Activated CD4-positive, alpha-beta memory T cell treated with anti-CD3 and anti-CD28 coated beads for 36 hours (primary cell): ENCODE measurements at regions of chr6 and their contacts with region 1.

Region 1: GRCh38 chr6:46090115-46091079 is 39.4 kb upstream of the ENPP4 start:
- DNase-seq: peak; percentile 73
- H3K4me3 Mint-ChIP-seq: no peak overlapping the region
- H3K27ac Mint-ChIP-seq: no peak overlapping the region
- H3K4me1 Mint-ChIP-seq: no peaks in the 10 kb centered on the region
- H3K27me3 Mint-ChIP-seq: peaks cover 30% of the 10 kb centered on the region

Region 2: DNA sequence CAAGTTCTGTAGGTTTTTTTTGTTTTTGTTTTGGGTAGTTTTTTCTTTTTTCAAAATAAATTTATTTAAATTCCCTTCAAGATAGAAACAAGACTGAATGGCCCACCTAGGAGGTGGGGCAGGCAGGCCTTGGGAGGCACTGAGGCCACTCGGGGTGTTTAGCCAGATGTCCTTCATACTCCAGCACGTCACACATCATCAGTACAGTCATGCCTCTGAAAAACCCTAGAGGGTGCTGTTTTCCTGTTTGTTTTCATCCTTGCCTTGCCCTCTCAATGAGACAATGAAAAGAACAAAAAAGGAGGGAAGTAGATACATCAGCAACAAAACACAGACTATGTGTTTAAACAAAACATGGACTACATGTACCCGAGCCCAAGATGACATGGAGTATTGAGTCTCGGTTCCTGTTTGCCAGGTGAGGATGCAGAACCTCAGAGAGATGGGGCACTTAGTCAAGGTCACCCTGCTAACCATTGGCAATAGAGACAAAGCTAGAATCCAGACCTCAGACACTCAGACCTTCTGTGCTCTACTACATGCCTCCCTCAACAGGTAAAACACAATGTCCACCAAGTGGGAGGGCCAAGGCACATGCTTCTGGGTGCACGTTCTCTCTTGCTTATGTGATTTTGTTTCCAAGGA is 47.9 kb before region 1 on chr6:
- CTCF ChIA-PET with region 1: interaction called, 19 read pairs
- POLR2A ChIA-PET with region 1: no interaction called
- intact Hi-C with region 1: loop called (anchors 1 kb)
- DNase-seq: peak; percentile 23
- H3K4me3 Mint-ChIP-seq: no peak overlapping the region
- H3K27ac Mint-ChIP-seq: no peak overlapping the region
- H3K4me1 Mint-ChIP-seq: peaks cover 13% of the 10 kb centered on the region
- H3K27me3 Mint-ChIP-seq: peaks cover 1% of the 10 kb centered on the region

Region 3: DNA sequence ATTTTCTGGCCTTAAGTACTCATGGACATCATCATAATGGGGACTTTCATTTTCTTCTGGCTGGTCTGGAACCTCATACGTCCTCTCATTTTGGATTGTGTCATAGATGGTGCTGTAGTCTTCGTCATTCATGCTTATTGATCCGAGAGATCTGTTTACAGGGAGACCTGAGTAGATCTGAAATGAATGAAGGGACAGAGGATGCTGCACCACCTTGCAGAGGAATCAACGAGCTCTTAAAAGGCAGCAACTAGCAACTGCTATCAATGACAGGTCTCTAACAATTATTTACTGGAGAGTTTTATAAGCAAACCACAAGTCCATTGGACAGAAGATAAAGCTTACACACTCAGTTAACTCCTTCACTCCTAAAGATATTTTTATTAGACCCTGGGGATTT is 10.3 kb before region 1 on chr6:
- CTCF ChIA-PET with region 1: interaction called, 17 read pairs
- POLR2A ChIA-PET with region 1: no interaction called
- intact Hi-C with region 1: no loop called
- DNase-seq: no peak
- H3K4me3 Mint-ChIP-seq: no peak overlapping the region
- H3K27ac Mint-ChIP-seq: no peak overlapping the region
- H3K4me1 Mint-ChIP-seq: peaks cover 12% of the 10 kb centered on the region
- H3K27me3 Mint-ChIP-seq: no peaks in the 10 kb centered on the region

Region 4: GRCh38 chr6:46129629-46130511 is 39.5 kb after region 1 on chr6 and contains the start of gene ENPP4:
- CTCF ChIA-PET with region 1: interaction called, 17 read pairs
- POLR2A ChIA-PET with region 1: no interaction called
- intact Hi-C with region 1: no loop called
- DNase-seq: peak; percentile 94
- H3K4me3 Mint-ChIP-seq: peak within 1 kb of the TSS; percentile 86
- H3K27ac Mint-ChIP-seq: peak within 1 kb of the TSS; percentile 57
- H3K4me1 Mint-ChIP-seq: peaks cover 30% of the 10 kb centered on the region
- H3K27me3 Mint-ChIP-seq: no peaks in the 10 kb centered on the region
- total RNA-seq, gene ENPP4: 8.5 to 8.8 TPM

Region 5: GRCh38 chr6:46410334-46410953 is 320.0 kb after region 1 on chr6:
- CTCF ChIA-PET with region 1: interaction called, 60 read pairs
- POLR2A ChIA-PET with region 1: no interaction called
- intact Hi-C with region 1: loop called (anchors 1 kb)
- DNase-seq: peak; percentile 34
- H3K4me3 Mint-ChIP-seq: no peak overlapping the region
- H3K27ac Mint-ChIP-seq: no peak overlapping the region
- H3K4me1 Mint-ChIP-seq: no peaks in the 10 kb centered on the region
- H3K27me3 Mint-ChIP-seq: no peaks in the 10 kb centered on the region

Region 6: DNA sequence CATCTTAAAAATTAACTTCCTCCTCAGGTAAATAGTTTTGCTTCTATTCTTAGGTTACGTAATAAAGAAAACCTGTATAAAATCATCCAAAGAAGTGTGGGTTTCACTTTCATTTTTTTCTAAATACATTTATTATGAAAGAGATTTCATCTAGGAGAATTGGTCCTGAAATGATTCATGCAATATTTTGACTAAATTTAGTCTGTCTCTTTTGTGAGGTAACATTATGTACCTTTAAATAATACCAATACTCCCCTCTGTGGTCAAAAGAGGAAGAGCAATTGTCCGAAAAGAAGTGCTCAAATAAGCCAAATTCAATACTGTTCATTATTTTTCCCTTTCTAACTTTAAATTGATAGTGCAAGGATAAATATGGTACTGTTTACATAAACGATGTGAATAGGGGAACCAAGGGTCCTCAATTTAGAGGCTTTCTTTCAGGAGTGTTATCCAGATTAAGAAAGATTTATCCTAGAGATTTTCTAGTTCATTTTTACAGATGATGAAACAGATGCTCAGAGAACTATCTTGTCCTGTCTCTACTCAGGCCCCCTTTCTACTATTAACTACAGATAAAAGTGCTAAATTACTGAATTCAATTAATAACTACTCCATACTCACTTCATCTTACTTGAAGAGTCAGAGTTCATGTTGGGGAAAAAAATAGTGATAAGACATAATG is 536.0 kb after region 1 on chr6:
- CTCF ChIA-PET with region 1: interaction called, 7 read pairs
- POLR2A ChIA-PET with region 1: no interaction called
- intact Hi-C with region 1: loop called (anchors 1 kb)
- DNase-seq: no peak
- H3K4me3 Mint-ChIP-seq: no peak overlapping the region
- H3K27ac Mint-ChIP-seq: no peak overlapping the region
- H3K4me1 Mint-ChIP-seq: peaks cover 10% of the 10 kb centered on the region
- H3K27me3 Mint-ChIP-seq: peaks cover 9% of the 10 kb centered on the region